ENCODE measurements at regions of chr11 and their contacts with region 1.

Region 1: GRCh38 chr11:7442588-7443215 is 42.6 kb upstream of the OLFML1 start:
- DNase-seq: peak; percentile 30
- ATAC-seq: peak; percentile 98
- H3K4me3 ChIP-seq: no peak overlapping the region
- H3K27ac ChIP-seq: no peak overlapping the region
- H3K4me1 ChIP-seq: no peaks in the 10 kb centered on the region
- H3K27me3 ChIP-seq: no peaks in the 10 kb centered on the region
- CTCF ChIP-seq: peak; percentile 86 to 92 (median 90)
- EP300 ChIP-seq: no peak
- POLR2A ChIP-seq: no peak
- RAD21 ChIP-seq: peak; percentile 98

Region 2: GRCh38 chr11:7688238-7688826 is 245.6 kb after region 1 on chr11:
- CTCF ChIA-PET with region 1: interaction called, 5 read pairs
- POLR2A ChIA-PET with region 1: no interaction called
- RAD21 ChIA-PET with region 1: no interaction called
- SMC1A ChIA-PET with region 1: interaction called, 3 read pairs
- in situ Hi-C with region 1: no loop called
- intact Hi-C with region 1: loop called (anchors 5 kb)
- DNase-seq: no peak
- ATAC-seq: peak; percentile 84
- H3K4me3 ChIP-seq: no peak overlapping the region
- H3K27ac ChIP-seq: no peak overlapping the region
- H3K4me1 ChIP-seq: no peaks in the 10 kb centered on the region
- H3K27me3 ChIP-seq: peaks cover 0 to 2% of the 10 kb centered on the region in 2 experiments; a peak in 2 of 4 replicates
- CTCF ChIP-seq: peak; percentile 76 to 80 (median 79)
- EP300 ChIP-seq: no peak
- POLR2A ChIP-seq: no peak
- RAD21 ChIP-seq: peak; percentile 80

Region 3: DNA sequence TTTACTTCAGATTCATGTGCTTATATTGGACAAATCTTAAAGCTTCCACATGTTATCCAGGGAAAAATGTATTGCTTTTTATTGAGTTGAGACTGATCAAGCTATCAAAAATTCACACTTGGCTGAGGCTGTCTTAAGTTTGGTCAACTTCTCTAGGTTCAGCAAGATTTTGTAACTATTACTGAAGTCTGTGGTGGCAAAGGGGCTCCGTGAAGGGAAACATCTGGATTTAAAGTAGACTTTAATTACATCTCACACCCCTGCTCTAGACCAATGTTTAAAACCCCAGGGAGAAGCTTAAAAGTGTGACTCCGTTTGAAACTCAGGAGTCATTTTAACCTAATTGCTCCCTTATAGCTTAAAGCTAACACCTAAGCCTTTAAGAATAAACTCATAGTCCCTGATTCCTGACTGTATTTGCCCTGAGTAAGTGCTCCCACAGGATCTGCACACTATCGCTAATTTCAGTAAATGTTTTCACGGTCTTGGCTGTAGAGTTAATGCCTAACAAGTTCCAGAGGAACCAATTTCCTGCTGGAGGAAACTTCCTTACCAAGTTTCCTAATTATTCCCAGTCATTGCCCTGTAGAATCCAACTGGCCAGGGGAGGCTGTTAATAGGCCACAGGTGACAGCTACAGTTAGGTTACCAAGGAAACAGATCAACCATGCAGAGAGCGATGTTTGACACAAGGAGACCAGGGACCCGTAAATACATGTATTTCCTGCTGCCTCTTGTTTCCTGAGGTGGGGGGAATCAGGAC is 447.9 kb after region 1 on chr11:
- CTCF ChIA-PET with region 1: no interaction called
- POLR2A ChIA-PET with region 1: no interaction called
- RAD21 ChIA-PET with region 1: no interaction called
- SMC1A ChIA-PET with region 1: no interaction called
- in situ Hi-C with region 1: no loop called
- intact Hi-C with region 1: no loop called
- DNase-seq: no peak
- ATAC-seq: peak; percentile 60
- H3K4me3 ChIP-seq: 0 out of 2 replicates have a peak overlapping the region, but pooled peaks have one; percentile 7
- H3K27ac ChIP-seq: no peak overlapping the region
- H3K4me1 ChIP-seq: peaks cover 14% of the 10 kb centered on the region
- H3K27me3 ChIP-seq: no peaks in the 10 kb centered on the region; a peak in 1 of 4 replicates
- CTCF ChIP-seq: no peak
- EP300 ChIP-seq: no peak
- POLR2A ChIP-seq: no peak
- RAD21 ChIP-seq: no peak

Region 4: GRCh38 chr11:8533332-8533731 is 1090.6 kb after region 1 on chr11:
- CTCF ChIA-PET with region 1: no interaction called
- POLR2A ChIA-PET with region 1: no interaction called
- RAD21 ChIA-PET with region 1: no interaction called
- SMC1A ChIA-PET with region 1: no interaction called
- in situ Hi-C with region 1: no loop called
- intact Hi-C with region 1: no loop called
- DNase-seq: peak; percentile 86
- ATAC-seq: peak; percentile 94
- H3K4me3 ChIP-seq: peak overlapping the region; percentile 2; the same call in 1 of the 2 replicates
- H3K27ac ChIP-seq: peak overlapping the region; percentile 89
- H3K4me1 ChIP-seq: peaks cover 20% of the 10 kb centered on the region
- H3K27me3 ChIP-seq: no peaks in the 10 kb centered on the region
- CTCF ChIP-seq: peak; percentile 33 to 49 (median 47); a peak in 5 of 6 replicates
- EP300 ChIP-seq: no peak
- POLR2A ChIP-seq: no peak
- RAD21 ChIP-seq: peak; percentile 54

Measured in GM12878 (cell line).